ENCODE measurements at regions of chr6 and their contacts with region 1.

Region 1: DNA sequence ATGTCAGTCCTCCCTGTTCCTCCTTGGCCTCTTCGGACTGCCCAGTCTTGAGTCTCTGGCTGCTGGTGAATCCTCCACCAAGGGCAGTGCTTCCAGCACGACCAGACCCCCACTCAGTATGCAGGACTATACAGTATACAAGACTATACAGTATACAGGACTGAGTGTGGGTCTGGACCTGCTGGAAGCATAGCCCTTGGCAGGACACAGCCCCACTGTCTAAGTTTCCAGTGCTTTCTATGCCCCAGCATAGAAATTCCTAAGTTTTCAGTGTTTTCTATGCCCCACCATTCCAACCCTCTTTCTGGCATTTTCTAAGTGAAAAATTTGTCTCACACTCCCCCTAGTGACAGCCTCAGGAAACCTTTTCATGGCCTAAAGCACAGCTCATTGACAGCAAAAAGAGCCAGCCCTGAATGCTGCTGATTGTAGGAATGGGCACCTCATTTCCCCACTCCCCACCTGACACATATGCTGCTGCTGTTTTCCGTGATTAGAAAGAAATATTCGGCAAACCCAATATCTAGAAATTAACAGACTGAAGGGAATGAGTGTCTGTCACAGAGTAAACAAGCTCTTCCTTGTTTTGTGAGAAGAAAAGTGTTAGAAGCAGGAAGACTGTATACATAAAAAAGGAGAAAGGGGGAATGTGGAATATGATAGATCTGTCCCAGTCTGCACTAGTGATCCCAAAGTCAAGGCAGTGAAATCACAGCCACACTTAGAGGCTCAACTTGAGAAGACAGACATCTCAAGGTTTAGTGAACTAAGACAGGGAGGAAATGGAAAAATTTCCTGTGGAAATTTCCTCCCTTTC is 206.9 kb downstream of the IBTK start:
- DNase-seq: peak in 2 of 5 donors; percentile 31
- ATAC-seq: peak; percentile 38 to 84 (median 76)
- H3K4me3 ChIP-seq: no peak overlapping the region
- H3K27ac ChIP-seq: peak overlapping the region in 3 of 12 donors; percentile 3 to 48 (median 17)
- H3K4me1 ChIP-seq: peaks cover 0 to 16% (median 0%) of the 10 kb centered on the region in 12 donors
- H3K27me3 ChIP-seq: no peaks in the 10 kb centered on the region
- CTCF ChIP-seq: peak; percentile 45 to 77 (median 64)
- POLR2A ChIP-seq: no peak

Region 2: GRCh38 chr6:81787313-81788068 is 253.1 kb before region 1 on chr6:
- intact Hi-C with region 1: loop called in 1 of 10 experiments (anchors 10 kb)
- DNase-seq: no peak
- ATAC-seq: peak in 1 of 4 donors; percentile 49
- H3K4me3 ChIP-seq: no peak overlapping the region
- H3K27ac ChIP-seq: no peak overlapping the region
- H3K4me1 ChIP-seq: peaks cover 0 to 16% (median 0%) of the 10 kb centered on the region in 12 donors
- H3K27me3 ChIP-seq: no peaks in the 10 kb centered on the region
- CTCF ChIP-seq: no peak
- POLR2A ChIP-seq: no peak